ENCODE measurements at regions of chr22 and their contacts with region 1.

Region 1: DNA sequence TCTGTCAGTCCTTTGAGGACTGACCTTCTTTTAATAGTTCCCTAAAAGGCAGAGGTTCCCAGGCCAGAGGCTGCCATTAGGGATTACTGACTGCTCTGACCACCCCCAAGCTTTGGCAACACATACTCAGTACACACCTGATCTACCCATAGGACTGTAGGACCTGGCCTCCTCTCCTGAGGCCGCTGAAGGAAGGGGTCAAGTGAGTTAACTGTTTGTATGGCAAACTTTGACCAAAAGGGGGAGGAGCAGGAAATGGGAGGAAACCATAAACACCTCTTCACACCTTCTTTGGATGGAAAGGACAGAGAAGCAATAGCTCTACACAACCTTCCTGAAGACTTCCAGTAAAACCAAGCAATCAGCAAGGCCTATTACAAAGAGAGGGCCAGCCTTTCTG is 104.0 kb downstream of the APOL5 start:
- DNase-seq: no peak
- ATAC-seq: no peak
- H3K4me3 ChIP-seq: no peak overlapping the region
- H3K27ac ChIP-seq: no peak overlapping the region
- H3K4me1 ChIP-seq: peaks cover 7% of the 10 kb centered on the region
- H3K27me3 ChIP-seq: no peaks in the 10 kb centered on the region
- CTCF ChIP-seq: no peak
- POLR2A ChIP-seq: no peak
- RAD21 ChIP-seq: no peak

Region 2: DNA sequence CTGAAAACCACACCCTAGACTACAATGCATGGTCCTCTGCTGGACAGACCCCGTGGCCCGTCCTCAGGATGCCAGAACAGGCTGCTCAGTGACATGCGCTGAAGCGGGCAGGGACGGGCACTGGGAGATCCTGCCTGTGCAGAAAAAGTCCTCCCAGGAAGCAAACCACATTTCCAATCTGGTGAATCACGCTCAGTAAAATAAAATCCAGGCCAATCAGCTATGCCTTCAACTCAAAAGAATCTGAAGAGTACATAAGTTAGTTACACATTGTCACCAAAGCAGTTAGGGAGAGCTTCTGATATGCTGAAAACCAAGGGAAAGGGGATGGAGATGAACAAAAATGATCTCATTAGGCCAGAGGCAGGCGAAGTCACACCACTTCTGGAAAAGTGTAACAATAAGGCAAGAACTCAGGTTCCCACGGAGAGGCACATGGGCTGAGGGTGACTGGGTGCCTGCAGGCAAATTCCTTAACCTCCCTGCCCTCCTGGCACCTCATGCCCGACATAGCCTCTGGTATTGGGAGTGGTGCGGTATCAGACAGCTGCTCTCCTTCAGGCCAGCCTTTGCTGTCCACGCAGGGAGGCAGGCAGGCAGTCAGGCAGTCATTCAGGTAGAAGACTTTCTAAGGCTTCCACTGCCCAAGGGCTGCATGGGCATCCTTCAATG is 37.6 kb before region 1 on chr22:
- CTCF ChIA-PET with region 1: no interaction called
- POLR2A ChIA-PET with region 1: interaction called, 12 read pairs
- dilution Hi-C with region 1: no loop called
- in situ Hi-C with region 1: no loop called
- intact Hi-C with region 1: loop called (anchors 5 kb)
- DNase-seq: no peak
- ATAC-seq: no peak
- H3K4me3 ChIP-seq: no peak overlapping the region
- H3K27ac ChIP-seq: no peak overlapping the region
- H3K4me1 ChIP-seq: peaks cover 16% of the 10 kb centered on the region
- H3K27me3 ChIP-seq: no peaks in the 10 kb centered on the region
- CTCF ChIP-seq: no peak
- POLR2A ChIP-seq: no peak
- RAD21 ChIP-seq: no peak

Measured in IMR-90 (cell line).